ENCODE measurements at regions of chr5 and their contacts with region 1.

Region 1: GRCh38 chr5:148730943-148731861 is 76.9 kb upstream of the HTR4 start:
- DNase-seq: peak; percentile 73
- H3K4me3 Mint-ChIP-seq: peak overlapping the region; percentile 47
- H3K27ac Mint-ChIP-seq: no peak overlapping the region
- H3K4me1 Mint-ChIP-seq: peaks cover 12% of the 10 kb centered on the region
- H3K27me3 Mint-ChIP-seq: peaks cover 1% of the 10 kb centered on the region

Region 2: DNA sequence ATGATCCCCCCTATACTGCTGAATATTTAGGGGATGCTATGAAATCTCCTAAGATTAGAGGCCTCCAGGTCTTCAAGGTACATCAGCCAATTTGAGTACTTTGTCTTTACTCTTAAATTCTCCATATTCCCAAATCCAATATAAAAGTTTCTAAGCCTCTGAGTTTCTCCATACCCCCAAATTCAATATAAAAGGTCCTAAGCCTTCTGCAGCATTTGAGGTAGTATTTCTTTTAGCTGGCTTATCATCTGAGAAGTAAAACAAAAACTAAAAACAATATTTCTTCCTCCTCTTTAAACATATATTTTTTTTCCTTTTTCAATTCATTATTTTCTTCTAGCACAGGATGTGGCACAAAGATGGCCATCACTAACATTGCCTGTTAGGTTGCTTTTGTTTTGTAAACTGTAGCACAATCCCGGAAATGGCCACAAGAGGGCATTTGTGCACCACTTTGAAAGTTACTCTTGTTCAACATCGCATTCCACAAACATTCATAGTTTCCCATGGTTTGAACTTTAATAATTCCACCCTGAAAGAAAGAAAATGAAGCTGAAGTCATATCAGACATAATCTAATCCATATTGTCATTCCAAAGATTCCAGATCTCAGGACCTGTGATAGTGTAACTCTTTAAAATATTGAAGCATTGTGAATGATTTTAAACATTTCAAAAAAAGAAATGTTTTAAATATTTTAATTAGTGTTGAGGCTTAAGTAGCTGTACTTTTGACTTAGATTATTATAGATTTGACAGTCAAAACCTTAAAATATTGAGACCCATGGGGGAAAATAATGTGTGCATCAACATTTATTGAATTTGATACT is 873.7 kb before region 1 on chr5:
- CTCF ChIA-PET with region 1: interaction called, 3 read pairs
- POLR2A ChIA-PET with region 1: no interaction called
- intact Hi-C with region 1: loop called (anchors 1 kb)
- DNase-seq: peak; percentile 46
- H3K4me3 Mint-ChIP-seq: no peak overlapping the region
- H3K27ac Mint-ChIP-seq: no peak overlapping the region
- H3K4me1 Mint-ChIP-seq: no peaks in the 10 kb centered on the region
- H3K27me3 Mint-ChIP-seq: peaks cover 2% of the 10 kb centered on the region

Region 3: DNA sequence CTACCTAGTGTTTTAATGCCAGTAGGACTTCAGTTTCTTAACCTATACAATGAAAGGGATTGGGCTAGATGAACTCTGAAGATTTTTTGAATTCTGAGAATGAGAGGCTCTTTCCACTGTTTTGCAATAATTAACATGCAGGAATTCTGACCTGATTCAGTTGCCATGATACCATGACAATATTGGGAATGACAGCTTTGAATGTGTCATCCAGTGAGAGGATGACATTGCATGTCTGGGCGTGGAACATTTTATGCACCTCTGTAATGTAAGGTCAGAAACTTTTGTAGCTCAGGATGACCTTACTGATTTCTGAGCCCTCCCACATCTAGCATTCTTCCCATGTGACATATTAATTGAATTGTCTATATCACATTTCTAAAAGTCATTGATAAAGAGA is 698.1 kb before region 1 on chr5:
- CTCF ChIA-PET with region 1: no interaction called
- POLR2A ChIA-PET with region 1: no interaction called
- intact Hi-C with region 1: no loop called
- DNase-seq: no peak
- H3K4me3 Mint-ChIP-seq: no peak overlapping the region
- H3K27ac Mint-ChIP-seq: no peak overlapping the region
- H3K4me1 Mint-ChIP-seq: no peaks in the 10 kb centered on the region
- H3K27me3 Mint-ChIP-seq: no peaks in the 10 kb centered on the region

Region 4: DNA sequence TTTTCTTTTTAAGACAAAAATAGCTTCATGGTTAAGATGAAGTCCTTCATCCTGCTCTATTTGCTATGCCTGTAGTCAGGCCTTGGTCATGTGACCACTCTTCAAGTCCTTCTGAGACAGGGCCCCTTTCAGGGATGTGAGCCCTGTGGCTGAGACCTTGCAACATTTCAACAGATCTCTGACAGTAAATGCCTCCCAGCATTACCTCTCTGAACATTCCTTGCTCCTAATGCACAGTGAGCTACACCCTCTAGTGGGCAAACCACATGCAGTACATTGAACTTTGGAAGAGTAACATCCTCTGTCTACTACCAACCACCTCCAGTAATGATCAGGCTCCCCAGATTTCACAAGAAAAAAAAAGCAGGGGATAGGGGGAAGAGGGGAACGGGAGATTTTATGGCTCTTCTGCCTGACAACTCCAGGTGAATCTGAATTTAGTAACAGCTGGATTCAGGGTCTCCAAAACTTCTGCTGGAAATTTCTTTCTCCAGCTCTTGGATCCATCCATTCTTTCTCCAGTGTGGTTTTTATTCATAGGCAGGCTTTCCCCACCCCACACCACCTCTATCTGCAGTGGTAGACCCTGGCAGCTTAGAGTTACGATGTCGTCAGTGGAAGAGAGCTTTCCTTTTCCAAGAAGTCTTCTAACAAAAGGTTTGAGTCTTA is 356.4 kb before region 1 on chr5:
- CTCF ChIA-PET with region 1: interaction called, 6 read pairs
- POLR2A ChIA-PET with region 1: no interaction called
- intact Hi-C with region 1: loop called (anchors 2 kb)
- DNase-seq: peak; percentile 11
- H3K4me3 Mint-ChIP-seq: no peak overlapping the region
- H3K27ac Mint-ChIP-seq: no peak overlapping the region
- H3K4me1 Mint-ChIP-seq: peaks cover 3% of the 10 kb centered on the region
- H3K27me3 Mint-ChIP-seq: no peaks in the 10 kb centered on the region

Region 5: DNA sequence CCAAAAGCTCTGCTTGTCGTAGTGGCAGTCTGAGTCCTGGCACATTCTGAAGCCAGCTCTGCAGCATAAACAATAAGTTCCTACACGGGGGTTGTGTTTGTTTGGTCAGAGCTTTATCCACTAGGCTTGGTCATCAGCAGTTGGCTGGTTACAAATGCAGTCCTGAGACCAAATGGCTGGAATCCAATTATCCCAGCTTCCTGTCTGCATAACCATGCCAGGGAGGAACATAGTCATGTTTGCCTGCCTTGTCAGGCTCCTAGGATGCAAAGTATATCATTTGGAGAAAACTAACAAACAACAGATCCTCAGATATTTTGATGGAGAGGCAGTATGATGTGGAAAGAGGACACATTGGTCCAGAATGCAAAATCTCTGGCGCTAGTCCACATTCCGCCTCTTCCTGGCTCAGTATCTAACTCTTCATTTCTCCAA is 261.7 kb before region 1 on chr5:
- CTCF ChIA-PET with region 1: interaction called, 11 read pairs
- POLR2A ChIA-PET with region 1: no interaction called
- intact Hi-C with region 1: no loop called
- DNase-seq: no peak
- H3K4me3 Mint-ChIP-seq: no peak overlapping the region
- H3K27ac Mint-ChIP-seq: no peak overlapping the region
- H3K4me1 Mint-ChIP-seq: no peaks in the 10 kb centered on the region
- H3K27me3 Mint-ChIP-seq: peaks cover 3% of the 10 kb centered on the region

Region 6: DNA sequence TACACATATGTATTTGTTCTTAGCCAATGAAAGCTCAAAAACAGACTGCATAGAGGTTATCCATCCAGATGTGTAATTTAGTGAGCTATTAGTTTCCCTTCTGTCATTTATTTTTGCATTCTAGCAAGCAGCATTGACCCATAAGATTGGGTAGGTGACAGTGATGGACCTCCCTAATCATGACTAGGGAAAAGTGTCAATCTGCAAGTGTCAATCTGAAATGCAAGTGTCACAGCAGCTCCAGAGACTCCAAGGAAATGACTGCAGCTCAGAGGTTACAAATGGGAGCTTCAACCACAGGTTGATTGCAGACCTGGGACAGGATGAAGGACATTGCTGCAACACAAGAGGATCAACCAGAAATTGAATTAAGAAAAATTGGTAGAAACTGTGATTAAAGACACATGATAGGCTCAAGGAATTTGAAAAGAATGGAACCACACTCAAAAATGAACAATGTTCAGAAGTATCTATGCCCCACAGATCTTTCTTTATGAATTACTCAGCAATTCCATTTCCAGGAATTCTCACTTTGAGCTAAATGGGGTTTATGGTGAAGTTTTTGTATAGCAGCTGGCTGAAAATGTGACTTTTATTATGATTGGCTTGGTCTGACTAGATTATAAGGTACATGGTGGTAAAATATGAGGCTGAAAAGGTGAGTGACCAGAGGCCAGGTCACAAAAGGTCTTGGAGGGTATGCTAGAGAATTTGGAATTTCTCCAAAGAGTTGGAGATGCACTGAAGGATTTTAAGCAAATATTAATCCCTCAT is 17.3 kb before region 1 on chr5:
- CTCF ChIA-PET with region 1: interaction called, 27 read pairs
- POLR2A ChIA-PET with region 1: interaction called, 4 read pairs
- intact Hi-C with region 1: no loop called
- DNase-seq: no peak
- H3K4me3 Mint-ChIP-seq: no peak overlapping the region
- H3K27ac Mint-ChIP-seq: no peak overlapping the region
- H3K4me1 Mint-ChIP-seq: peaks cover 17% of the 10 kb centered on the region
- H3K27me3 Mint-ChIP-seq: peaks cover 42% of the 10 kb centered on the region

Region 7: DNA sequence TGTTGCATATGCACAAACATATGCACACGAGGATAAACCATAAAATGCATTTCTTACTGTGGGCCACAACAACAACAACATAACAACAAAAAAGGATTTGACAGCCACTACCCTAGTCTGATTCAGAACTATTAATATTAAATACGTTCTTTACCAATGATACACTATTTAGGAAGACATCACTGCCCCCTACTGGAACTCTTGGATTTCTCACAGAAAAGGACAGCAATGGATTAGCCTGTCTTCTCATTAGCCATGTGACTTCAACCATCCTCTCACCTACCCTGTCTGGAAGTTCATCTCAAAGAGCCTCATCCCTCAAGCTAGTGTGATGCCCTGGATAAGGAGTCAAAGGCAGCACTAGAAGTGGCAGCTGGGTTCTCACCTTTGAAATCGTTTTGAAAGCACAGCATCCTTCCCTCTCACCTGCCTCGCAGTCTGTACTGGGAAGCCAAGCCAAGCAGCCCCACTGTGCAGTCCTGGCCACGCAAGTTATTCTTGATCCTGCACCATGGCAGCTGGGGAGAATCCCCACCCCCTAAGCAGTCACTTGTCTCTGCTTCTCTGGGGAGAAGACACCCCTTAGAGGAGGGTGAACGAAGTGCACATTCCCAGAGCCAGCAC is 267.1 kb after region 1 on chr5:
- CTCF ChIA-PET with region 1: interaction called, 90 read pairs
- POLR2A ChIA-PET with region 1: no interaction called
- intact Hi-C with region 1: loop called (anchors 1 kb)
- DNase-seq: no peak
- H3K4me3 Mint-ChIP-seq: no peak overlapping the region
- H3K27ac Mint-ChIP-seq: no peak overlapping the region
- H3K4me1 Mint-ChIP-seq: no peaks in the 10 kb centered on the region
- H3K27me3 Mint-ChIP-seq: peaks cover 10% of the 10 kb centered on the region

Region 8: DNA sequence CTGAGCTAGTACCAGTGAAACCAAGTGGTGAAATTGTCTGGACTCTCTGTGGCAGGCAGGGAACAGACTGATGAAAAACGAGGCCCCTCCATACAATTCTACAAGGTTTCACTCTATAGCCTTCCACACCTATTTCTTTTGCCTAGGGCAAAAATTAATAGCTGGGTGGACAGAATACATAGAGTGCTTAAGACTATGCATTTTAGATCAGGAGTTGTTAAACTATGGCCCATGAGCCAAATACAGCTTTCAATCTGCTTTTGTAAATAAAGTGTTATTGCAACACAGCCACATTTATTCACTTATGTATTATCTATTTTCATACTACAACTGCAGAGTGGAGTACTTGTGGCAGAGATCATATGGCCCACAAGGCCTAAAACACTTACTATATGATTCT is 286.4 kb after region 1 on chr5:
- CTCF ChIA-PET with region 1: no interaction called
- POLR2A ChIA-PET with region 1: no interaction called
- intact Hi-C with region 1: no loop called
- DNase-seq: no peak
- H3K4me3 Mint-ChIP-seq: no peak overlapping the region
- H3K27ac Mint-ChIP-seq: no peak overlapping the region
- H3K4me1 Mint-ChIP-seq: peaks cover 13% of the 10 kb centered on the region
- H3K27me3 Mint-ChIP-seq: peaks cover 8% of the 10 kb centered on the region

Region 9: GRCh38 chr5:149268928-149269557 is 537.8 kb after region 1 on chr5:
- CTCF ChIA-PET with region 1: interaction called, 4 read pairs
- POLR2A ChIA-PET with region 1: no interaction called
- intact Hi-C with region 1: loop called (anchors 2 kb)
- DNase-seq: no peak
- H3K4me3 Mint-ChIP-seq: no peak overlapping the region
- H3K27ac Mint-ChIP-seq: no peak overlapping the region
- H3K4me1 Mint-ChIP-seq: peaks cover 12% of the 10 kb centered on the region
- H3K27me3 Mint-ChIP-seq: peaks cover 23% of the 10 kb centered on the region

Measured in activated CD4-positive, alpha-beta memory T cell treated with anti-CD3 and anti-CD28 coated beads for 36 hours (primary cell).